Astrocyte of the cerebellum (primary cell): ENCODE measurements at regions of chr15 and their contacts with region 1.

Region 1: GRCh38 chr15:77983708-77984445 is 93.6 kb downstream of the TBC1D2B start:
- DNase-seq: no peak
- H3K4me3 ChIP-seq: no peak overlapping the region
- CTCF ChIP-seq: peak; percentile 23

Region 2: GRCh38 chr15:78772738-78773137 is 788.9 kb after region 1 on chr15:
- in situ Hi-C with region 1: loop called (anchors 5 kb)
- DNase-seq: no peak
- H3K4me3 ChIP-seq: no peak overlapping the region
- CTCF ChIP-seq: no peak